GM12878 (cell line): ENCODE measurements at regions of chr20 and their contacts with region 1.

Region 1: DNA sequence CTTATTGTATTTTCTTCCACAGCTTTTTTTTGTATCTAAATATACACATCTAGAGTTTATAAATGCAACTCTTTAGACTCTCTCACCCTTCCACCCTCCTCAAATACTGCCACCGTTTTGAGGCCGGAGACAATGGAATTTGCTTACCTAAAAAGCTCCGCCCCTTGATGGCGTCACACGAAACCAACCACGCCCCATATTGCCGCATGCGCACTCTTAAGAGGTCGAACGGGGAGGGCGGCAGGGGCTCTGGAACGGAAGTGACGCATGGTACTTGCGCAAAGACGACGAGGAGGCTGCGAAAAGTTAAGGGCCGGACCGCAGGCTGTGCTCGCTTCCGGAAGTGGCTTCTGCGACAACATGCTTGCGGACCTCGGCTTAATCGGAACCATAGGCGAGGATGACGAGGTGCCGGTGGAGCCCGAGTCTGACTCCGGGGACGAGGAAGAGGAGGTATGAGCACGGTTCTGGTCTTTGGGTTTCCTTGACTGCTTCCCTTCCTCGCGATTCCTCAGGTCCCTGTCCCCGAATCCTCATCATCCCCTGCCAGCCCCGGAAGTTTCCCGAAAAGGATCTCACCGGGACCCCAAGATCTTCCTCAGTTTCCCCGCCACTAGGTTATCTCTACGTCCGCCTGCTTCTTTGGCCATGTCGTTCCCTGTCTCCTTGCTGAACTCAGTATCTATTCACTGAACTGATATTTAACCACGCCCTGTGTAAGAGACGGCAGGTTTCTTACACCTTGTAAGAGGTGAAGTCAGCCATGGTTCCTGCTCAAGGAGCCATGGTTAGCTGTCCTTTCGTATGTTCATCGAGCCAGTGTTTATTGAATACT is at the start of gene DDX27:
- DNase-seq: peak; percentile 99
- ATAC-seq: peak; percentile 94
- H3K4me3 ChIP-seq: peak within 1 kb of the TSS; percentile 90
- H3K27ac ChIP-seq: peak within 1 kb of the TSS; percentile 95
- H3K4me1 ChIP-seq: no peaks in the 10 kb centered on the region
- H3K27me3 ChIP-seq: no peaks in the 10 kb centered on the region
- CTCF ChIP-seq: no peak
- EP300 ChIP-seq: no peak
- POLR2A ChIP-seq: peak; percentile 97
- RAD21 ChIP-seq: no peak
- polyA plus RNA-seq, gene DDX27: 19.8 to 33.4 TPM

Region 2: GRCh38 chr20:49100972-49101371 is 118.3 kb before region 1 on chr20:
- CTCF ChIA-PET with region 1: interaction called, 12 read pairs
- POLR2A ChIA-PET with region 1: no interaction called
- RAD21 ChIA-PET with region 1: interaction called, 3 read pairs
- SMC1A ChIA-PET with region 1: interaction called, 6 read pairs
- in situ Hi-C with region 1: no loop called
- intact Hi-C with region 1: no loop called
- DNase-seq: no peak
- ATAC-seq: peak; percentile 55
- H3K4me3 ChIP-seq: no peak overlapping the region
- H3K27ac ChIP-seq: peak overlapping the region; percentile 21; the same call in 1 of the 2 replicates
- H3K4me1 ChIP-seq: no peaks in the 10 kb centered on the region
- H3K27me3 ChIP-seq: no peaks in the 10 kb centered on the region
- CTCF ChIP-seq: no peak
- EP300 ChIP-seq: no peak
- POLR2A ChIP-seq: no peak
- RAD21 ChIP-seq: no peak

Region 3: GRCh38 chr20:49138431-49138830 is 80.9 kb before region 1 on chr20:
- CTCF ChIA-PET with region 1: interaction called, 333 read pairs
- POLR2A ChIA-PET with region 1: interaction called, 12 read pairs
- RAD21 ChIA-PET with region 1: interaction called, 79 read pairs
- SMC1A ChIA-PET with region 1: interaction called, 65 read pairs
- in situ Hi-C with region 1: loop called (anchors 5 kb)
- intact Hi-C with region 1: loop called (anchors 1 kb)
- DNase-seq: no peak
- ATAC-seq: no peak
- H3K4me3 ChIP-seq: no peak overlapping the region
- H3K27ac ChIP-seq: no peak overlapping the region
- H3K4me1 ChIP-seq: no peaks in the 10 kb centered on the region
- H3K27me3 ChIP-seq: no peaks in the 10 kb centered on the region
- CTCF ChIP-seq: no peak
- EP300 ChIP-seq: no peak
- POLR2A ChIP-seq: no peak
- RAD21 ChIP-seq: no peak

Region 4: DNA sequence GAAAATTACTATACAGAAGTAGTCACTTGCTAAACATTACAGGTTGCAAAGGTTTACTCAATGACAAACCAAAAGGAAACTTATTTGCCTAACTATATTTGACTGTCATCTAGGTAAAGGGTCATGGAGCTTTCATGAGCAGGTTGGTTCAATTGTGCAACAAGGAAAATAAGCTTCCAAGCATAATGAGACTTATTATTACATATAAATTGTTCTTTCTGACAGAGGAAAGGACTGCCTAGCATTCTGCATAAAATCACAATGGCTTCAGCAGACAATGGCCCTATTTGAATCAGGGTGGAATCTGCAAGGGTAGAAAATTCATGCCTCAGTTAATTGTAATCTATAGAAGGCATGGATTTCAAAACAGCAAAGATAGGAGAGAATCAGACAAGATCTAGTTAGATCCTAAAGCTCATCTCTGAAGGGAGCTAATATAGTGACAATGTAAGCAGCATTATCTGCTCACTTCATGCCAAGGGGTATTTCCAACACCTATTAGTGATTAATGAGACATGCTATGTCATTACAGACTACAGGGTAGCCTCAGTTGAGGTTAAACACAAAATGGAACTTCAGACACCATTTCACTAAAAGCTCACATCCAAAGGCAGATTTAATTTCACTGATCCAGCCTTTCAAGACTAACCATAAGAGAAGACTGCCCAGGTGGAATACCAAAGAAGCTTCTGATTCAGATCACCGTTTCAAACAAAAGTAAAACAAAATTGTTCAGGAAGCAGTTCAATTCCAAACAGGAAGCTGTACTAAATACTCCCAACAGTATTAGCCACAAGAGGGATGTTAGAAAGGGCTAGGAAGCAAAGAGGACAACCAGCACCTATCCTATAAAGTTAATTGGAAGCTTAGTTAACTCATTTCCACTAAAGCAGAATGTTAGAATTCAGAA is 39.7 kb before region 1 on chr20:
- CTCF ChIA-PET with region 1: interaction called, 80 read pairs
- POLR2A ChIA-PET with region 1: interaction called, 6 read pairs
- RAD21 ChIA-PET with region 1: interaction called, 12 read pairs
- SMC1A ChIA-PET with region 1: interaction called, 27 read pairs
- in situ Hi-C with region 1: no loop called
- intact Hi-C with region 1: no loop called
- DNase-seq: no peak
- ATAC-seq: peak; percentile 89
- H3K4me3 ChIP-seq: peak overlapping the region; percentile 34
- H3K27ac ChIP-seq: peak overlapping the region; percentile 74
- H3K4me1 ChIP-seq: peaks cover 16% of the 10 kb centered on the region; the same call in 1 of the 2 replicates
- H3K27me3 ChIP-seq: no peaks in the 10 kb centered on the region
- CTCF ChIP-seq: no peak
- EP300 ChIP-seq: 0 out of 4 replicates have a peak, but pooled peaks of 1 of the 2 experiments have one; percentile 12
- POLR2A ChIP-seq: no peak
- RAD21 ChIP-seq: no peak

Region 5: GRCh38 chr20:49199729-49200293 is 19.5 kb before region 1 on chr20:
- CTCF ChIA-PET with region 1: interaction called, 14 read pairs
- POLR2A ChIA-PET with region 1: interaction called, 3 read pairs
- RAD21 ChIA-PET with region 1: no interaction called
- SMC1A ChIA-PET with region 1: interaction called, 4 read pairs
- in situ Hi-C with region 1: no loop called
- intact Hi-C with region 1: no loop called
- DNase-seq: no peak
- ATAC-seq: no peak
- H3K4me3 ChIP-seq: no peak overlapping the region
- H3K27ac ChIP-seq: no peak overlapping the region
- H3K4me1 ChIP-seq: no peaks in the 10 kb centered on the region
- H3K27me3 ChIP-seq: no peaks in the 10 kb centered on the region
- CTCF ChIP-seq: no peak
- EP300 ChIP-seq: no peak
- POLR2A ChIP-seq: no peak
- RAD21 ChIP-seq: no peak

Region 6: GRCh38 chr20:49245921-49246740 is 26.8 kb after region 1 on chr20:
- CTCF ChIA-PET with region 1: interaction called, 13 read pairs
- POLR2A ChIA-PET with region 1: interaction called, 7 read pairs
- RAD21 ChIA-PET with region 1: interaction called, 3 read pairs
- SMC1A ChIA-PET with region 1: interaction called, 3 read pairs
- in situ Hi-C with region 1: no loop called
- intact Hi-C with region 1: no loop called
- DNase-seq: no peak
- ATAC-seq: peak; percentile 89
- H3K4me3 ChIP-seq: no peak overlapping the region
- H3K27ac ChIP-seq: no peak overlapping the region
- H3K4me1 ChIP-seq: no peaks in the 10 kb centered on the region
- H3K27me3 ChIP-seq: no peaks in the 10 kb centered on the region
- CTCF ChIP-seq: peak; percentile 65 to 76 (median 76)
- EP300 ChIP-seq: no peak
- POLR2A ChIP-seq: no peak
- RAD21 ChIP-seq: peak; percentile 70

Region 7: DNA sequence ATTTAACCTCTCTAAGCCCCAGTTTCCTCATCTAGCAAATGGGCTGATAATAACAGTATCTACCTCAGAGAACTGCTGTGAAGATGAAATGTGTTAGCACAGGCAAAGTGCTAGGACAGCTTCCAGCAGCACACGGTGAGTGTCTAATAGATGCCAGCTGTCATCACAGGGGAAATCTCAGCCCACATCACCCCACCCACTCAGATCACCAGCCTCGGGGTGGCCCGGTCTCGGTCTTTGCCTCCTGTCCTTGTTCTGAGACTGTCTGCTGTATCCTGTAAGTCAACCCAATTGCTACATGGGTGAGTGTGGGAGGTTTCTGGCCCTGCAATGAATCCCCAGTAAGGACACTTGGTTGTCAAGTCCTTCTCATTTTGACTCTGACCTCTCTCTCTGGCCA is 158.0 kb after region 1 on chr20:
- CTCF ChIA-PET with region 1: no interaction called
- POLR2A ChIA-PET with region 1: no interaction called
- RAD21 ChIA-PET with region 1: no interaction called
- SMC1A ChIA-PET with region 1: no interaction called
- in situ Hi-C with region 1: no loop called
- intact Hi-C with region 1: no loop called
- DNase-seq: no peak
- ATAC-seq: no peak
- H3K4me3 ChIP-seq: no peak overlapping the region
- H3K27ac ChIP-seq: no peak overlapping the region
- H3K4me1 ChIP-seq: no peaks in the 10 kb centered on the region
- H3K27me3 ChIP-seq: peaks cover 0 to 2% of the 10 kb centered on the region in 2 experiments; a peak in 1 of 4 replicates
- CTCF ChIP-seq: no peak
- EP300 ChIP-seq: no peak
- POLR2A ChIP-seq: no peak
- RAD21 ChIP-seq: no peak

Region 8: GRCh38 chr20:49620364-49621240 is 401.3 kb after region 1 on chr20:
- CTCF ChIA-PET with region 1: no interaction called
- POLR2A ChIA-PET with region 1: no interaction called
- RAD21 ChIA-PET with region 1: no interaction called
- SMC1A ChIA-PET with region 1: no interaction called
- in situ Hi-C with region 1: no loop called
- intact Hi-C with region 1: no loop called
- DNase-seq: peak; percentile 100
- ATAC-seq: peak; percentile 92
- H3K4me3 ChIP-seq: peak overlapping the region; percentile 8; the same call in 1 of the 2 replicates
- H3K27ac ChIP-seq: peak overlapping the region; percentile 57
- H3K4me1 ChIP-seq: peaks cover 37% of the 10 kb centered on the region
- H3K27me3 ChIP-seq: no peaks in the 10 kb centered on the region
- CTCF ChIP-seq: no peak
- EP300 ChIP-seq: peak; percentile 91 to 92
- POLR2A ChIP-seq: no peak
- RAD21 ChIP-seq: peak; percentile 17; the same call in 1 of the 2 replicates